CD8-positive, alpha-beta T cell (primary cell): ENCODE measurements at regions of chr3 and their contacts with region 1.

Region 1: GRCh38 chr3:187848401-187848800 is 103.1 kb upstream of the BCL6 start:
- DNase-seq: no peak
- ATAC-seq: no peak
- H3K4me3 ChIP-seq: no peak overlapping the region
- H3K4me3 Mint-ChIP-seq: no peak overlapping the region
- H3K27ac ChIP-seq: no peak overlapping the region
- H3K27ac Mint-ChIP-seq: no peak overlapping the region
- H3K4me1 ChIP-seq: no peaks in the 10 kb centered on the region
- H3K4me1 Mint-ChIP-seq: peaks cover 4% of the 10 kb centered on the region
- H3K27me3 ChIP-seq: no peaks in the 10 kb centered on the region
- H3K27me3 Mint-ChIP-seq: no peaks in the 10 kb centered on the region
- CTCF ChIP-seq: no peak

Region 2: DNA sequence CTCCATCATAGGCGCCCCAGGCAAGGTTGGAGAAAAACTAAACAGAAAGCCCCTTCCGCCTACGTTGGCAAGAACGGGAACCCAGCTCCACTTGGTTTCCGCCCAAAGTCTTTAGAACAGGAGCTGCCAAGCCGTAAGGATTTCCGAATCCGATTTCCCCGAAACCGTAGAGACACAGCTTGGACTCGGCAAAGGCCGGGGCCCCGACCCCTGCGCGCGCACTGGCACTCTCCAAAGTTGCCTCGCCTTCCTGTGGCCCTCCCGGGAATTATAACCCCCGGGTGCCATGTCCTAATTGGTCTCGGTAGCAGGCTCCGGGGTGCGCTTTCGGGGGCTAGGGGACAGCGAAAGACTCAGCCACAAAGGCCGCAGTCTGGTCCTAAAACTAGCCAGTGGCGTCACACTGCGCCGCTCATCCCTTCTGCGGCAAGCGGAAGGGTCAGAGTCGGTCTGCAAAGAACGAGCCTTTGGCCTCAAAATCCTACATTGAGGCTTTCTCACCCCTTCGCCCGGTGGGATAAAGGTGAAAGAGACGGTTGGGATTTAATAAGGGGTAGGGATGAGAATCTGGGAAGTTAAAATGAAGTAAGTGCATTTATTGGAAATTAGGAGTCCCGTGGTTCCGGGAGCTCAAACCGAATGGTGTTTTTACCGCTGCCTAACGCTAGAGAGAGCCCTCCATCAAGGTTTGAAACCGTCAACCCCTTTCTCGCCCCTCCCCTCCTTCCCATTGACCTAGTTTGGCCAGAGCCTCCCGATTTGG is 109.9 kb before region 1 on chr3:
- CTCF ChIA-PET with region 1: no interaction called
- POLR2A ChIA-PET with region 1: no interaction called
- intact Hi-C with region 1: no loop called
- DNase-seq: peak; percentile 38 to 88 (median 65)
- ATAC-seq: peak; percentile 32
- H3K4me3 ChIP-seq: peak overlapping the region; percentile 88 to 94
- H3K4me3 Mint-ChIP-seq: peak overlapping the region; percentile 94
- H3K27ac ChIP-seq: peak overlapping the region; percentile 44 to 88
- H3K27ac Mint-ChIP-seq: peak overlapping the region; percentile 100
- H3K4me1 ChIP-seq: peaks cover 15% of the 10 kb centered on the region
- H3K4me1 Mint-ChIP-seq: peaks cover 52% of the 10 kb centered on the region
- H3K27me3 ChIP-seq: no peaks in the 10 kb centered on the region
- H3K27me3 Mint-ChIP-seq: no peaks in the 10 kb centered on the region
- CTCF ChIP-seq: peak; percentile 85

Region 3: GRCh38 chr3:187830181-187830580 is 18.2 kb before region 1 on chr3:
- CTCF ChIA-PET with region 1: no interaction called
- POLR2A ChIA-PET with region 1: no interaction called
- intact Hi-C with region 1: loop called in 1 of 2 experiments (anchors 1 kb)
- DNase-seq: no peak
- ATAC-seq: no peak
- H3K4me3 ChIP-seq: no peak overlapping the region
- H3K4me3 Mint-ChIP-seq: no peak overlapping the region
- H3K27ac ChIP-seq: no peak overlapping the region
- H3K27ac Mint-ChIP-seq: no peak overlapping the region
- H3K4me1 ChIP-seq: no peaks in the 10 kb centered on the region
- H3K4me1 Mint-ChIP-seq: peaks cover 10% of the 10 kb centered on the region
- H3K27me3 ChIP-seq: no peaks in the 10 kb centered on the region
- H3K27me3 Mint-ChIP-seq: no peaks in the 10 kb centered on the region
- CTCF ChIP-seq: no peak

Region 4: GRCh38 chr3:187858711-187859110 is 10.3 kb after region 1 on chr3:
- CTCF ChIA-PET with region 1: no interaction called
- POLR2A ChIA-PET with region 1: no interaction called
- intact Hi-C with region 1: no loop called
- DNase-seq: no peak
- ATAC-seq: no peak
- H3K4me3 ChIP-seq: no peak overlapping the region
- H3K4me3 Mint-ChIP-seq: no peak overlapping the region
- H3K27ac ChIP-seq: no peak overlapping the region
- H3K27ac Mint-ChIP-seq: no peak overlapping the region
- H3K4me1 ChIP-seq: no peaks in the 10 kb centered on the region
- H3K4me1 Mint-ChIP-seq: no peaks in the 10 kb centered on the region
- H3K27me3 ChIP-seq: no peaks in the 10 kb centered on the region
- H3K27me3 Mint-ChIP-seq: no peaks in the 10 kb centered on the region
- CTCF ChIP-seq: no peak

Region 5: DNA sequence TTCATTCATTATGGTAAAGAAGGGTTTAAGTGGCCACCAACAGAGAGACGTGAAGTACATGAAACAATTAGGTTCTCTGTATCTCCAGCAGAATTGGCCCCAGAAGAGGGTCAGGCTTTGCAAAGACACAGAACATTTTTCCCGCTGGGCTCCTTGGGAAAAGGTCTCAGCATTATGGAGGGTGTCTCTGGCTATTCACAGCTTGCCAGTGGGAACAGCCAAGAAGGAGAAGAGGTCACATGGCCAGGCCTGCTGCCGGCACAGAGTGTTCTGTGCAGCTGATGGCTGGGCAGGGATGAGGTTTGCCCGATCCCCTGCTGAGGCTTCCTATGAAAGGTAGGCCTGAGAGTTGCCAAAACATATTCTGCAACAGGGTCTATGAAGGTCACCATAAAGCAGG is 227.8 kb after region 1 on chr3:
- CTCF ChIA-PET with region 1: no interaction called
- POLR2A ChIA-PET with region 1: no interaction called
- intact Hi-C with region 1: no loop called
- DNase-seq: no peak
- ATAC-seq: no peak
- H3K4me3 ChIP-seq: no peak overlapping the region
- H3K4me3 Mint-ChIP-seq: no peak overlapping the region
- H3K27ac ChIP-seq: no peak overlapping the region
- H3K27ac Mint-ChIP-seq: no peak overlapping the region
- H3K4me1 ChIP-seq: no peaks in the 10 kb centered on the region
- H3K4me1 Mint-ChIP-seq: peaks cover 2% of the 10 kb centered on the region
- H3K27me3 ChIP-seq: no peaks in the 10 kb centered on the region
- H3K27me3 Mint-ChIP-seq: no peaks in the 10 kb centered on the region
- CTCF ChIP-seq: no peak